ENCODE measurements at regions of chr19 and their contacts with region 1.

Region 1: GRCh38 chr19:33430674-33431277 is 57.3 kb downstream of the CEBPG start:
- DNase-seq: peak; percentile 69
- ATAC-seq: peak; percentile 86
- H3K4me3 Mint-ChIP-seq: no peak overlapping the region
- H3K27ac Mint-ChIP-seq: no peak overlapping the region
- H3K4me1 Mint-ChIP-seq: peaks cover 4% of the 10 kb centered on the region
- H3K27me3 Mint-ChIP-seq: peaks cover 3% of the 10 kb centered on the region

Region 2: GRCh38 chr19:33496038-33496895 is 65.5 kb after region 1 on chr19:
- CTCF ChIA-PET with region 1: no interaction called
- DNase-seq: no peak
- ATAC-seq: no peak
- H3K4me3 Mint-ChIP-seq: no peak overlapping the region
- H3K27ac Mint-ChIP-seq: no peak overlapping the region
- H3K4me1 Mint-ChIP-seq: no peaks in the 10 kb centered on the region
- H3K27me3 Mint-ChIP-seq: no peaks in the 10 kb centered on the region

Region 3: GRCh38 chr19:33535226-33535625 is 104.5 kb after region 1 on chr19:
- CTCF ChIA-PET with region 1: no interaction called
- DNase-seq: no peak
- ATAC-seq: no peak
- H3K4me3 Mint-ChIP-seq: no peak overlapping the region
- H3K27ac Mint-ChIP-seq: no peak overlapping the region
- H3K4me1 Mint-ChIP-seq: no peaks in the 10 kb centered on the region
- H3K27me3 Mint-ChIP-seq: no peaks in the 10 kb centered on the region

Region 4: DNA sequence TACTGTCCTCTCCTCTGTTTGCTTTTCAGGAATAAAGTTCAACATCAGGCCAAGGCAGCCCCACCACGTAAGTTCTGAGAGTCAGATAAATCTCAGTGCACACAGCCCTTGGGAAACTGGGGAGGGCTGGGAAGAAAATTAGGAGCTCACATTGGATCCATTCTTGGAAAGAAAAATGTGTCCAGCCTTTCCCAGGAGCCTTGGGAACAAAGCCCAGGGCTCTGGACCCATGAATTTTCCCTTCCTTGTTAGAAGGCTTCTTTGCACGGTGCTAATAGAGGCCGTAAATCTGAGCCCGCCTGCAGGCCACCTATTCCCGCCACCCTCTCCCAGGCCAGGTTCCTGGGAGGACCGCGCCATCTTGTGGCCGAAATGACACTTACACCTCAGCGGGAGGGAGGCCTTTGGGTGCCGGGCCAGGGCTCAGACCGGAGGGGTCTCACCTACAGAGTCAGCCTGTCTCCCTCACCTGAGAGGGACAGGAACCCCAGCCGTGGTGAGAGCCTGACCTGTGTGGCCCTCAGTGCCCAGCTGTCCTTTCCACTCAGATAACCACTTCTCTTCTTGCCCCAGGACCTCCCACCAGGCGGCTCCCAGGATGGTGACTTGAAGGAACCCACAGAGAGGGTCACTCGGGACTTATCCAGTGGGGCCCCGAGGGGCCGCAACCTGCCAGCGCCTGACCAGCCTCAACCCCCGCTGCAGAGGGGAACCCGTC is 340.8 kb after region 1 on chr19:
- CTCF ChIA-PET with region 1: interaction called, 30 read pairs
- DNase-seq: peak; percentile 73
- ATAC-seq: peak; percentile 72
- H3K4me3 Mint-ChIP-seq: no peak overlapping the region
- H3K27ac Mint-ChIP-seq: no peak overlapping the region
- H3K4me1 Mint-ChIP-seq: no peaks in the 10 kb centered on the region
- H3K27me3 Mint-ChIP-seq: no peaks in the 10 kb centered on the region